CD4-positive, alpha-beta memory T cell (primary cell): ENCODE measurements at regions of chr7 and their contacts with region 1.

Region 1: GRCh38 chr7:99504603-99505323 is at the start of gene ZKSCAN5:
- DNase-seq: peak; percentile 97 to 99 (median 97)
- H3K4me3 ChIP-seq: peak within 1 kb of the TSS; percentile 94 to 95
- H3K4me3 Mint-ChIP-seq: peak within 1 kb of the TSS; percentile 93 to 100 (median 99)
- H3K27ac ChIP-seq: peak within 1 kb of the TSS; percentile 86
- H3K27ac Mint-ChIP-seq: peak within 1 kb of the TSS; percentile 89 to 100 (median 99)
- H3K4me1 ChIP-seq: peaks cover 24% of the 10 kb centered on the region
- H3K4me1 Mint-ChIP-seq: peaks cover 18 to 42% (median 29%) of the 10 kb centered on the region in 4 donors
- H3K27me3 ChIP-seq: no peaks in the 10 kb centered on the region
- H3K27me3 Mint-ChIP-seq: no peaks in the 10 kb centered on the region
- total RNA-seq, gene ZKSCAN5: 8.8 to 9.3 TPM

Region 2: GRCh38 chr7:99357701-99358490 is 146.9 kb before region 1 on chr7:
- CTCF ChIA-PET with region 1: no interaction called
- POLR2A ChIA-PET with region 1: no interaction called
- intact Hi-C with region 1: no loop called
- DNase-seq: no peak
- H3K4me3 ChIP-seq: no peak overlapping the region
- H3K4me3 Mint-ChIP-seq: no peak overlapping the region
- H3K27ac ChIP-seq: no peak overlapping the region
- H3K27ac Mint-ChIP-seq: peak overlapping the region in 2 of 7 donors; percentile 57 to 79
- H3K4me1 ChIP-seq: no peaks in the 10 kb centered on the region
- H3K4me1 Mint-ChIP-seq: peaks cover 0 to 2% (median 0%) of the 10 kb centered on the region in 4 donors
- H3K27me3 ChIP-seq: no peaks in the 10 kb centered on the region
- H3K27me3 Mint-ChIP-seq: no peaks in the 10 kb centered on the region

Region 3: GRCh38 chr7:99374103-99375064 is 130.4 kb before region 1 on chr7 and contains the start of gene ARPC1B:
- CTCF ChIA-PET with region 1: no interaction called
- POLR2A ChIA-PET with region 1: interaction called, 9 read pairs
- intact Hi-C with region 1: loop called (anchors 2 kb)
- DNase-seq: peak; percentile 81 to 88 (median 81)
- H3K4me3 ChIP-seq: peak within 1 kb of the TSS; percentile 73 to 82
- H3K4me3 Mint-ChIP-seq: peak within 1 kb of the TSS; percentile 79 to 87 (median 81)
- H3K27ac ChIP-seq: peak within 1 kb of the TSS; percentile 87
- H3K27ac Mint-ChIP-seq: peak within 1 kb of the TSS; percentile 87 to 100 (median 98)
- H3K4me1 ChIP-seq: peaks cover 44% of the 10 kb centered on the region
- H3K4me1 Mint-ChIP-seq: peaks cover 13 to 42% (median 25%) of the 10 kb centered on the region in 4 donors
- H3K27me3 ChIP-seq: no peaks in the 10 kb centered on the region
- H3K27me3 Mint-ChIP-seq: no peaks in the 10 kb centered on the region
- total RNA-seq, gene ARPC1B: 188 to 191 TPM

Region 4: DNA sequence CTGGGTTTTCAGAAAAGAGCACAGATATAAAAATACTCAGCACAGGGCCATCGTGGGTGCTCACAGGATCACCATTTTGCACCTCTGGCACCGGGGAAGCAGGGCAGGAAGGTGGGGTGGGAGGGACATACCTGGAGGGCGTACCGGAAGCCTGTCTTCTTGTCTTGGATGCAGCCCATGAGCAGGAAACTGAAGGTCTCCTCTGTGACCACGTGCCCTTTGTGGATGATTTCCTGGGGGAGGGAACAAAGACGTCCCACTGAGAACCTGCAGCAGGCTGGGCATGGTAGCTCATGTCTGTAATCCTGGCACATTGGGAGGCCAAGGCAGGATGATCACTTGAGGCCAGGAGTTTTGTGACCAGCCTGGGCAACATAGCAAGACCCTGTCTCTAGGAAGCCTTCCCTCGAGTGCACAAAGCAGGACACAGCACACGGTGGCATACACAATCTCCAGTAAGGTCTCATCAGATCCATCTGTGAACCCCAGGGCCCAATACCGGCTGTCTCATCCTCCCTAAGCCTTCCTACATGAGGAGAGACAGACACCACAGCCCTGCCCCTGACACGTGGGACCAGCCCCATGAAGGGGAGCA is 75.7 kb before region 1 on chr7:
- CTCF ChIA-PET with region 1: no interaction called
- POLR2A ChIA-PET with region 1: no interaction called
- intact Hi-C with region 1: no loop called
- DNase-seq: peak in 2 of 5 donors; percentile 25 to 34
- H3K4me3 ChIP-seq: no peak overlapping the region
- H3K4me3 Mint-ChIP-seq: peak overlapping the region in 1 of 8 donors; percentile 8
- H3K27ac ChIP-seq: no peak overlapping the region
- H3K27ac Mint-ChIP-seq: peak overlapping the region in 4 of 7 donors; percentile 31 to 85 (median 39)
- H3K4me1 ChIP-seq: peaks cover 5% of the 10 kb centered on the region
- H3K4me1 Mint-ChIP-seq: peaks cover 2 to 8% (median 5%) of the 10 kb centered on the region in 4 donors
- H3K27me3 ChIP-seq: no peaks in the 10 kb centered on the region
- H3K27me3 Mint-ChIP-seq: no peaks in the 10 kb centered on the region

Region 5: DNA sequence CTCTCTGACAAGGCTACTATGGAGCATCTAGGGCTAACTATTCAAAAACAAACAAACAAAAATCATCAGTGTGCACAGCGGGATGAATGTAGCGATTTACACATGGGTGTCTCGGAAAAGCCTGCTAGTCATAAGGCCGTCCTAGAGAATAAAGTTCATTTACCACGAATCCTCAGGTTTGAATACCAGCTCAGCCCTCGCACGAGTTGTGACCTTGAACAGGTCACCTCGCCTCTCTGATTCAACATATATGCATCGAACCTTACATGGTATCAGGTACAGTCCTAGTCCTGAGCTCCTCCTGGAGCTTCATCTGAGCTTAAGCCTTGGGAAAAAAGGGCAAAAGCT is 39.4 kb before region 1 on chr7:
- CTCF ChIA-PET with region 1: interaction called, 3 read pairs
- POLR2A ChIA-PET with region 1: interaction called, 18 read pairs
- intact Hi-C with region 1: loop called (anchors 1 kb)
- DNase-seq: no peak
- H3K4me3 ChIP-seq: peak overlapping the region; percentile 78 to 83
- H3K4me3 Mint-ChIP-seq: peak overlapping the region; percentile 90 to 97 (median 96)
- H3K27ac ChIP-seq: peak overlapping the region; percentile 78
- H3K27ac Mint-ChIP-seq: peak overlapping the region; percentile 79 to 98 (median 95)
- H3K4me1 ChIP-seq: peaks cover 47% of the 10 kb centered on the region
- H3K4me1 Mint-ChIP-seq: peaks cover 19 to 52% (median 30%) of the 10 kb centered on the region in 4 donors
- H3K27me3 ChIP-seq: no peaks in the 10 kb centered on the region
- H3K27me3 Mint-ChIP-seq: no peaks in the 10 kb centered on the region

Region 6: DNA sequence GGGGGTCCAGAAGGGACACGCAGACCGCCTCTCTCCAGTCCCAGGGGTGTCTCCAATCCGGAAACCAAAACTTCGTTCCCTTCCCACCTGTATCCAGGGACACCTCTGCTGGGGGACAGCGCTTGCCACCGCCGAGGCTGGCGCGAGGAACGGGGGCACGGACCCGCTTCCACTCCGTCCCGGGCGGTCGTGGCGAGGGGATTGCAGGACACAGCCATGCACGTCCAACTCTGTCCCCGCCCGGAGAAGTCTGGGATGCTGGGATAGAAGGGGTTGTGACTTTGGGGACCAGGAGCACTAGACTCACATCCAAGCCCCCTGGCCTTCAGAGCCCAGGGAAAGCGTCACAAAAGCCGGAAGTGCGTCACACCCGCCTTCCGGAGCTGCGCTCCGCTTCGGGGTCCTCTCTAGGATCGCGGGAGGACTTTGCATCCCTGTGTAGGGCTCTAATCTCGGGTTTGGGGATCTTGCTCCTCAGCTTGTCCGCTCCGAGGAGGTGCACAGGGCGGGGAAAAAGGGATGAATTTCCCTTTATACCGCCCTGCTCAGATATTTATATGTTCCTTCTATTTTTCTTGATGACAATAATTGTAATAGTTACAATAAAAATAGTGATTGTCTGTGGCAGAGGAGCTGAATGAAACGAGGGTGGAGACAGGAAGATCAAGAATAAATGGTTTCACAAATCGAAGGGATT is 47.2 kb after region 1 on chr7 and contains the start of gene FAM200A:
- CTCF ChIA-PET with region 1: interaction called, 5 read pairs
- POLR2A ChIA-PET with region 1: interaction called, 86 read pairs
- intact Hi-C with region 1: loop called (anchors 1 kb)
- DNase-seq: peak; percentile 82 to 88 (median 84)
- H3K4me3 ChIP-seq: peak within 1 kb of the TSS; percentile 94 to 95
- H3K4me3 Mint-ChIP-seq: peak within 1 kb of the TSS; percentile 86 to 98 (median 92)
- H3K27ac ChIP-seq: peak within 1 kb of the TSS; percentile 97
- H3K27ac Mint-ChIP-seq: peak within 1 kb of the TSS; percentile 76 to 99 (median 91)
- H3K4me1 ChIP-seq: peaks cover 33% of the 10 kb centered on the region
- H3K4me1 Mint-ChIP-seq: peaks cover 16 to 48% (median 30%) of the 10 kb centered on the region in 4 donors
- H3K27me3 ChIP-seq: no peaks in the 10 kb centered on the region
- H3K27me3 Mint-ChIP-seq: no peaks in the 10 kb centered on the region
- total RNA-seq, gene FAM200A: 12.9 to 13.0 TPM

Region 7: GRCh38 chr7:99616359-99617191 is 111.8 kb after region 1 on chr7 and contains the start of gene ZSCAN25:
- CTCF ChIA-PET with region 1: no interaction called
- POLR2A ChIA-PET with region 1: interaction called, 19 read pairs
- intact Hi-C with region 1: loop called (anchors 1 kb)
- DNase-seq: peak; percentile 85 to 86 (median 86)
- H3K4me3 ChIP-seq: peak within 1 kb of the TSS; percentile 79
- H3K4me3 Mint-ChIP-seq: peak within 1 kb of the TSS; percentile 96 to 99 (median 98)
- H3K27ac ChIP-seq: peak within 1 kb of the TSS; percentile 96
- H3K27ac Mint-ChIP-seq: peak within 1 kb of the TSS; percentile 90 to 99 (median 96)
- H3K4me1 ChIP-seq: peaks cover 21% of the 10 kb centered on the region
- H3K4me1 Mint-ChIP-seq: peaks cover 18 to 53% (median 37%) of the 10 kb centered on the region in 4 donors
- H3K27me3 ChIP-seq: no peaks in the 10 kb centered on the region
- H3K27me3 Mint-ChIP-seq: no peaks in the 10 kb centered on the region
- total RNA-seq, gene ZSCAN25: 40.4 to 43.1 TPM